Gastrocnemius medialis (tissue), 4 donors: ENCODE measurements at regions of chr1 and their contacts with region 1.

Region 1: GRCh38 chr1:84427520-84428188 is 29.4 kb downstream of the DNASE2B start:
- DNase-seq: no peak
- ATAC-seq: no peak
- H3K4me3 ChIP-seq: no peak overlapping the region
- H3K27ac ChIP-seq: no peak overlapping the region
- H3K4me1 ChIP-seq: no peaks in the 10 kb centered on the region
- H3K27me3 ChIP-seq: no peaks in the 10 kb centered on the region
- CTCF ChIP-seq: no peak
- POLR2A ChIP-seq: no peak

Region 2: DNA sequence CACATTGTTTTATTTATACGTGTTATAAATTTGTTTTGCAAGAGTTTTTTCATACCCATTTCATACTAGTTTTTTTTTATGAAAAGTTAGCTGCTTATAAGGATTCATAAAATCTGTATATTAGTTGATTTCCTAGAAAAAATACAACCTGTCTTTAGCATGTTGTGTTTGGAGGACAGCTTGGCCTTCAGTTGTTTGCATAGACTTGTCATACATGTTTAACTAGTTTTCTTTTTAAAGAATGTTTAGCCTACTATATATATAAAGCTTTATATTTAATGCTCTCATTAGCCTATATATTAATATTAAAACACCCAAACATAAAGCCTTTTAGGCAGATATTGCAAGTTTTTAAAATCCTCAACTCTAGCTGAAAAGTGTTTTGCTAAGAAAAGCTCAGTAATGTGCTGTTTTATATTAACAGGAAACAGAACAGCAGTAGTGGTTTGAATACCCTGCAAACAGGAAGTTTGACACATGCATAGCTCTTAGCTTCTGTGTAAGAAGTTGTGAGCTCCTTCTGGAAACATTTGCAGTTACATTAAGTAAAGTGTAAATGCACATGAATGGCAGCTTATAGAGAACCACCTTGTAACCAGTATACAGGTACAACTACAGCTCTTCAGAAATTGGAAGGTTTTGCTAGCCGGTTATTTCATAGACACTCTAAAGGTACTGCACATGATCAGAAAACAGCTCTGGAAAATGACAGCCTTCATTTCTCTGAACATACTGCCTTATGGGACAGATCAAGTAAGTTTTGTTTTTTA is 283.7 kb before region 1 on chr1 and contains the start of gene PRKACB:
- in situ Hi-C with region 1: loop called (anchors 5 to 10 kb)
- intact Hi-C with region 1: no loop called
- DNase-seq: no peak
- ATAC-seq: no peak
- H3K4me3 ChIP-seq: peak within 1 kb of the TSS in 1 of 4 donors; percentile 6
- H3K27ac ChIP-seq: no peak within 1 kb of the TSS
- H3K4me1 ChIP-seq: no peaks in the 10 kb centered on the region
- H3K27me3 ChIP-seq: no peaks in the 10 kb centered on the region
- CTCF ChIP-seq: no peak
- POLR2A ChIP-seq: peak in 1 of 2 donors; percentile 25
- total RNA-seq, gene PRKACB: 4.2 to 12.4 (median 7.0) TPM

Region 3: DNA sequence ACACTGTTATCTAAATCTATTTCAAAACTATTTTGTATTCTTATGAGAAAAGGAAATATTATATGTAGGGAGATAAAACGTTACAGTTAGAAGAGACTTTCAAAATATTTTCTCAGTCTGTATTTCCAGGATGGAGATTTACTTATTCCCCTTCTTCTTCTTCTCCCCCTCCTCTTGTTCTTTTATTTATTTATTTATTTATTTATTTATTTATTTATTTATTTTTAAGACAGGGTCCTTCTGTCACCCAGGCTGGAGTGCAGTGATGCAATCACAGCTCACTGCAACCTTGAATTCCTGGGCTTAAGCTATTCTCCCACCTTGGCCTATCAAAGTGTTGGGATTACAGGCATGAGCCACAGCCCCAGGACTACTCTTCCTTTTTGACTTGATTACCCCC is 48.6 kb after region 1 on chr1:
- in situ Hi-C with region 1: no loop called
- intact Hi-C with region 1: no loop called
- DNase-seq: no peak
- ATAC-seq: no peak
- H3K4me3 ChIP-seq: no peak overlapping the region
- H3K27ac ChIP-seq: no peak overlapping the region
- H3K4me1 ChIP-seq: peaks cover 14% of the 10 kb centered on the region in 2 donors
- H3K27me3 ChIP-seq: peaks cover 7 to 40% (median 35%) of the 10 kb centered on the region in 3 donors
- CTCF ChIP-seq: no peak
- POLR2A ChIP-seq: no peak